ENCODE measurements at regions of chr18 and their contacts with region 1.

Region 1: GRCh38 chr18:58567453-58568196 is 61.3 kb downstream of the ALPK2 start:
- DNase-seq: no peak
- ATAC-seq: no peak
- H3K4me3 ChIP-seq: no peak overlapping the region
- H3K27ac ChIP-seq: no peak overlapping the region
- H3K4me1 ChIP-seq: peaks cover 28% of the 10 kb centered on the region
- H3K27me3 ChIP-seq: no peaks in the 10 kb centered on the region
- CTCF ChIP-seq: no peak
- EP300 ChIP-seq: no peak
- POLR2A ChIP-seq: no peak
- RAD21 ChIP-seq: no peak

Region 2: GRCh38 chr18:58552057-58552461 is 15.6 kb before region 1 on chr18:
- CTCF ChIA-PET with region 1: interaction called, 6 read pairs
- POLR2A ChIA-PET with region 1: interaction called, 8 read pairs
- RAD21 ChIA-PET with region 1: interaction called, 13 read pairs
- SMC1A ChIA-PET with region 1: interaction called, 578 read pairs
- in situ Hi-C with region 1: no loop called
- intact Hi-C with region 1: no loop called
- DNase-seq: peak; percentile 82
- ATAC-seq: peak; percentile 78
- H3K4me3 ChIP-seq: no peak overlapping the region
- H3K27ac ChIP-seq: peak overlapping the region; percentile 80
- H3K4me1 ChIP-seq: peaks cover 37% of the 10 kb centered on the region
- H3K27me3 ChIP-seq: no peaks in the 10 kb centered on the region
- CTCF ChIP-seq: no peak
- EP300 ChIP-seq: peak; percentile 97
- POLR2A ChIP-seq: no peak
- RAD21 ChIP-seq: peak; percentile 25; the same call in 1 of the 2 replicates

Region 3: GRCh38 chr18:58605027-58606020 is 37.7 kb after region 1 on chr18:
- CTCF ChIA-PET with region 1: no interaction called
- POLR2A ChIA-PET with region 1: no interaction called
- RAD21 ChIA-PET with region 1: interaction called, 3 read pairs
- SMC1A ChIA-PET with region 1: no interaction called
- in situ Hi-C with region 1: no loop called
- intact Hi-C with region 1: loop called (anchors 5 kb)
- DNase-seq: peak; percentile 45
- ATAC-seq: peak; percentile 85
- H3K4me3 ChIP-seq: no peak overlapping the region
- H3K27ac ChIP-seq: no peak overlapping the region
- H3K4me1 ChIP-seq: peaks cover 13% of the 10 kb centered on the region
- H3K27me3 ChIP-seq: no peaks in the 10 kb centered on the region
- CTCF ChIP-seq: no peak
- EP300 ChIP-seq: no peak
- POLR2A ChIP-seq: no peak
- RAD21 ChIP-seq: no peak

Region 4: GRCh38 chr18:58615140-58616132 is 47.8 kb after region 1 on chr18:
- CTCF ChIA-PET with region 1: interaction called, 6 read pairs
- POLR2A ChIA-PET with region 1: interaction called, 3 read pairs
- RAD21 ChIA-PET with region 1: interaction called, 11 read pairs
- SMC1A ChIA-PET with region 1: interaction called, 16 read pairs
- in situ Hi-C with region 1: no loop called
- intact Hi-C with region 1: no loop called
- DNase-seq: peak; percentile 88
- ATAC-seq: peak; percentile 92
- H3K4me3 ChIP-seq: no peak overlapping the region; the same call in 1 of the 2 replicates
- H3K27ac ChIP-seq: peak overlapping the region; percentile 70
- H3K4me1 ChIP-seq: peaks cover 22% of the 10 kb centered on the region
- H3K27me3 ChIP-seq: no peaks in the 10 kb centered on the region
- CTCF ChIP-seq: no peak
- EP300 ChIP-seq: peak; percentile 54 to 74; a peak in 3 of 4 replicates
- POLR2A ChIP-seq: no peak
- RAD21 ChIP-seq: peak; percentile 21; the same call in 1 of the 2 replicates

Region 5: DNA sequence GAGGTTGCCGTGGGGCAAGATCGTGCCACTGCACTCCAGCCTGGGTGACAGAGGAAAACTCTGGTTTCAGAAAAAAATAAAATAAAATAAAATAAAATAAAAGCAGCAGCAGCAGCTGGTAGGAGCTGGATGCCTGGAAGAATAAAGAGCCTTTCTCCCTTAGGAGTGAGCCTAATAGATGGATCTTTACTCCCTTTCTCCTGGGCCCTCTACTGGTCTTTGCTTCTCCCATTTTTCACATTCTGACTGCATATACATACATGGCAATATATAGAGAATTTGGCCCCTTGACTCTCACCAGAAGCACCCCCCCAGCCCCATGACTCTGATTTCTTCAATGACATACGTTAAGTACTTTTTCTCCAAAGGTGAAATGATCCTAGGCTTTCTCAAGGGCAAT is 93.8 kb after region 1 on chr18:
- CTCF ChIA-PET with region 1: interaction called, 16 read pairs
- POLR2A ChIA-PET with region 1: interaction called, 11 read pairs
- RAD21 ChIA-PET with region 1: interaction called, 50 read pairs
- SMC1A ChIA-PET with region 1: interaction called, 42 read pairs
- in situ Hi-C with region 1: no loop called
- intact Hi-C with region 1: loop called (anchors 2 kb)
- DNase-seq: no peak
- ATAC-seq: no peak
- H3K4me3 ChIP-seq: peak overlapping the region; percentile 28; the same call in 1 of the 2 replicates
- H3K27ac ChIP-seq: peak overlapping the region; percentile 45; the same call in 1 of the 2 replicates
- H3K4me1 ChIP-seq: peaks cover 36% of the 10 kb centered on the region
- H3K27me3 ChIP-seq: no peaks in the 10 kb centered on the region
- CTCF ChIP-seq: peak; percentile 4 to 36 (median 20); a peak in 4 of 6 replicates
- EP300 ChIP-seq: no peak
- POLR2A ChIP-seq: no peak
- RAD21 ChIP-seq: peak; percentile 25; the same call in 1 of the 2 replicates

Region 6: DNA sequence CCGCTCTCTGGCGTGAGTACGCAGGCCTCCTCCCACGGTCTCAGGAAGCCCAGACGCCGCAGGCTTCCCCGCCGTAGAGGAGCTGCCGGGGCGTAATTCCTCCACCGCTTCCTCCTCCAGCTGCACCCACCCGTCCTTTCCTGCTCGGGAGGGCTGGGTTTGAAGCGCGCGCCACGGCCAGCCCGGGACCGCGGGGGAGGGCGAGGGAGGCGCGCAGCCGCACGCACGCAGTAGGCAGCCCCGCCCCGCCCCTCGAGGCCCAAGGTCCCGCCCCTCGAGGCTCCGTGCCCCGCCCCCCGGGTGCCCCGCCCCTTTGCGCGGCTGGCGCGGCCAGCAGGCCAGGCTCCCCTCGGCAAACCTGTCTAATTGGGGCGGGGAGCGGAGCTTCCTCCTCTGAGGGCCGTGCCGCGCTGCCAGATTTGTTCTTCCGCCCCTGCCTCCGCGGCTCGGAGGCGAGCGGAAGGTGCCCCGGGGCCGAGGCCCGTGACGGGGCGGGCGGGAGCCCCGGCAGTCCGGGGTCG is 103.5 kb after region 1 on chr18 and contains the start of gene MALT1:
- CTCF ChIA-PET with region 1: interaction called, 6 read pairs
- POLR2A ChIA-PET with region 1: interaction called, 23 read pairs
- RAD21 ChIA-PET with region 1: interaction called, 21 read pairs
- SMC1A ChIA-PET with region 1: interaction called, 8 read pairs
- in situ Hi-C with region 1: no loop called
- intact Hi-C with region 1: no loop called
- DNase-seq: peak; percentile 75
- ATAC-seq: peak; percentile 78
- H3K4me3 ChIP-seq: peak within 1 kb of the TSS; percentile 95
- H3K27ac ChIP-seq: peak within 1 kb of the TSS; percentile 93
- H3K4me1 ChIP-seq: peaks cover 16% of the 10 kb centered on the region; the same call in 1 of the 2 replicates
- H3K27me3 ChIP-seq: no peaks in the 10 kb centered on the region
- CTCF ChIP-seq: no peak
- EP300 ChIP-seq: peak in 1 of 2 experiments; percentile 17; a peak in 1 of 4 replicates
- POLR2A ChIP-seq: peak; percentile 96
- RAD21 ChIP-seq: no peak; the same call in 1 of the 2 replicates
- polyA plus RNA-seq, gene MALT1: 17.6 to 32.5 TPM